AG04450 (cell line): ENCODE measurements at regions of chr14 and their contacts with region 1.

Region 1: DNA sequence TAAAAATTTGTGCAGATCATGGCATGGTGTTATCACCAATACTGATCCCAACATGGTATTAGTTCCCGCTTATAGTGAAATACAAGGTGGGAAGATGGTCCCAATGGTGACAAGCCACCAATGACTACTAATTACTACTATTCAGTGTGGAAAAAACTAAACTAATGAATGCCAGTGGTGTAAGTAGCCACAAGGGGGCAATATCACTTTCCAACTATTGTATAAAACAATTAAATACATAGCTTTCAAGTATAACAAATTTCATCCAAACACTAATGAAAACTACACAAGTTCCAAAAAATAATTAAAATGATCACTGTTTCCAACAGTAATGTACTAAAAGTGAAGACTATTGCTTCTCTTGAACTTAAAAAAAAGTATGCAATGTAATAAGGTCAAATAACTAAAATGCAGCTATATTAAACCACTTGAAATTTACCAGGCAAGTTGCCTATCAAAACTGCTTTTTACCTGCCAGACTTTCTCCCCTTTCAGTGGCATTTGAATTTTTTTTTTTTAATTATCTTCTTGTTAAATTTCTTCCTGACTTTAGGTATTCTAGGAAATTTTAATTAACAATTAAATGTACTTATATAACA is 58.0 kb downstream of the PAPLN start:
- DNase-seq: no peak
- H3K4me3 ChIP-seq: no peak overlapping the region
- H3K27ac ChIP-seq: no peak overlapping the region
- H3K27me3 ChIP-seq: no peaks in the 10 kb centered on the region
- CTCF ChIP-seq: peak; percentile 70

Region 2: DNA sequence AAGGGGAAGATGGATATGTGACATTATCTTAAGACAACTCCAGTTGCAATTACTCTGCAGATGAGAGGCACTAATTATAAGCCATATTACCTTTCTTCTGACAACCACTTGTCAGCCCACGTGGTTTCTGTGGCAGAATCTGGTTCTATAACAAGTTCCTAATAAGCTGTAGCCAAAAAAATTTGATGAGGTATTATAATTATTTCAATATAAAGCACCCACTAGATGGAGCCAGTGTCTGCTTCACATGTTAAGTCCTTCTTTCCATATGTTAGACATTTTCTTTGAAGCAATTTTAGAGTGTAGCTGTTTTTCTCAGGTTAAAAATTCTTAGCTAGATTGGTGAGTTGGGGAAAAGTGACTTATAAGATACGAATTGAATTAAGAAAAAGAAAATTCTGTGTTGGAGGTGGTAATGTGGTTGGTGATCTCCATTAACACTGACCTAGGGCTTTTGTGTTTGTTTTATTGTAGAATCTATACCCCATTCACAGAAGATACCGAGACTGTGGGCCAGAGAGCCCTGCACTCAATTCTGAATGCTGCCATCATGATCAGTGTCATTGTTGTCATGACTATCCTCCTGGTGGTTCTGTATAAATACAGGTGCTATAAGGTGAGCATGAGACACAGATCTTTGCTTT is 122.1 kb before region 1 on chr14:
- CTCF ChIA-PET with region 1: interaction called, 16 read pairs
- POLR2A ChIA-PET with region 1: no interaction called
- DNase-seq: peak; percentile 7
- H3K4me3 ChIP-seq: no peak overlapping the region
- H3K27ac ChIP-seq: no peak overlapping the region
- H3K27me3 ChIP-seq: no peaks in the 10 kb centered on the region
- CTCF ChIP-seq: peak; percentile 65

Region 3: GRCh38 chr14:73283608-73284379 is 11.5 kb before region 1 on chr14:
- CTCF ChIA-PET with region 1: interaction called, 23 read pairs
- POLR2A ChIA-PET with region 1: no interaction called
- DNase-seq: no peak
- H3K4me3 ChIP-seq: no peak overlapping the region
- H3K27ac ChIP-seq: no peak overlapping the region
- H3K27me3 ChIP-seq: no peaks in the 10 kb centered on the region
- CTCF ChIP-seq: peak; percentile 35; the same call in 1 of the 2 replicates

Region 4: DNA sequence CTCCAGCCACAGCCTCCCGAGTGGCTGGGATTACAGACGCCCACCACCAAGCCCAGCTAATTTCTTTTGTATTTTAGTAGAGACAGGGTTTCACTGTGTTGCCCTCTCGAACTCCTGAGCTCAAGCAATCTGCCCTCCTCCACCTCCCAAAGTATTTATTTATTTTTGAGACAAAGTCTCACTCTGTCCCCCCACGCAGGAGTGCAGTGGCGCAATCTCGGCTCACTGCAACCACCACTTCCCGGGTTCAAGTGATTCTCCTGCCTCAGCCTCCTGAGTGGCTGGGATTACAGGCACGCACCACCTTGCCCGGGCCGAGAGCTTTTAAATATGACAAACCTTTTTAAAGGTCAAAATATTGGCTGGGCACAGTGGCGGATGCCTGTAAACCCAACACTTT is 148.5 kb after region 1 on chr14:
- CTCF ChIA-PET with region 1: interaction called, 15 read pairs
- POLR2A ChIA-PET with region 1: no interaction called
- DNase-seq: no peak
- H3K4me3 ChIP-seq: no peak overlapping the region
- H3K27ac ChIP-seq: no peak overlapping the region
- H3K27me3 ChIP-seq: no peaks in the 10 kb centered on the region
- CTCF ChIP-seq: no peak

Region 5: DNA sequence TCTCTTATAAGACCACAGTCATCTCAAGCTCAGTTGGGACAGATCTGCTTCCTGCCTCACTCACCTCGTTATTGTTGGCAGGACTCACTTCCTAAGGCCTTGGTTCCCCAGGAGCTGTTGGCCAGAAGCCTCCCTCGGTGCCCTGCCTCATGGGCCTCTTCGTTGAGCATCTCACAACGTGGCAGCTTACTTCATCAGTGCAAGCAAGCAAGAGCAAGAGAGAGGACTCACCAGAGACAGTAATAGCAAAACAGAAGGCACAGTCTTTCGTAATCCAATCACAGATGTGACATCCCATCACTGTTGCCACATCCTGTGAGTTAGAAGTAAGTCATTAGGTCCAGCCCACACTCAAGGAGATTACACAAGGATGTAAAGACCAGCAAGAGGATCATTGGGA is 168.1 kb after region 1 on chr14:
- CTCF ChIA-PET with region 1: interaction called, 173 read pairs
- POLR2A ChIA-PET with region 1: no interaction called
- DNase-seq: peak; percentile 75
- H3K4me3 ChIP-seq: peak overlapping the region; percentile 39
- H3K27ac ChIP-seq: peak overlapping the region; percentile 69
- H3K27me3 ChIP-seq: no peaks in the 10 kb centered on the region
- CTCF ChIP-seq: no peak